ENCODE measurements at regions of chr12 and their contacts with region 1.

Region 1: GRCh38 chr12:22856178-22856577 is 231.2 kb downstream of the ETNK1 start:
- DNase-seq: no peak
- H3K4me3 ChIP-seq: no peak overlapping the region
- H3K27ac ChIP-seq: no peak overlapping the region
- H3K4me1 ChIP-seq: peaks cover 0 to 10% (median 2%) of the 10 kb centered on the region in 4 experiments; a peak in 2 of 7 replicates
- H3K27me3 ChIP-seq: no peaks in the 10 kb centered on the region
- CTCF ChIP-seq: peak in 2 of 3 experiments; percentile 15 to 35; a peak in 2 of 4 replicates
- EP300 ChIP-seq: no peak
- POLR2A ChIP-seq: no peak
- RAD21 ChIP-seq: peak; percentile 72 to 86

Region 2: DNA sequence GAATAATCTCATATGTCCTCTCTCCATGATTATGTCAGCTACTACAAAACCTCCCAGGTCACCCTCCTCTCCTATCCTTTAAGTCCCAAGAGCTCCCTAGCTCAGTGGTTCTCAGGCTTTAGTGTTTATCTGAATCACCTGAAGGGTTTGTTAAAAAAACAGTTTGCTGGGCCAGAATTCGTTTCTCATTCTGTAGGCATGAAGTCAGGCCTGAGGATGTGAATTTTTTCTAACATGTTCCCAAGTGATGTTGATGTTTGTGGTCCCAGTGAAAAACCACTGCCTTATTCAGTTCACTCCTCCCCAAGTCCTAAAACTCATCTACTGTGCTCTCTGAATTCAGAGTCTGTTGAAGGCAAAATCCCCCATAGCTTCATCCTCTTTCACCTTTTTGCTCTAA is 10.2 kb after region 1 on chr12:
- CTCF ChIA-PET with region 1: interaction called, 15 read pairs
- POLR2A ChIA-PET with region 1: no interaction called
- DNase-seq: no peak
- H3K4me3 ChIP-seq: no peak overlapping the region
- H3K27ac ChIP-seq: no peak overlapping the region
- H3K4me1 ChIP-seq: no peaks in the 10 kb centered on the region; a peak in 1 of 7 replicates
- H3K27me3 ChIP-seq: no peaks in the 10 kb centered on the region
- CTCF ChIP-seq: no peak
- EP300 ChIP-seq: no peak
- POLR2A ChIP-seq: no peak
- RAD21 ChIP-seq: no peak

Region 3: GRCh38 chr12:22981711-22982110 is 125.5 kb after region 1 on chr12:
- CTCF ChIA-PET with region 1: interaction called, 22 read pairs
- POLR2A ChIA-PET with region 1: no interaction called
- DNase-seq: no peak
- H3K4me3 ChIP-seq: no peak overlapping the region
- H3K27ac ChIP-seq: no peak overlapping the region
- H3K4me1 ChIP-seq: no peaks in the 10 kb centered on the region; a peak in 1 of 7 replicates
- H3K27me3 ChIP-seq: no peaks in the 10 kb centered on the region
- CTCF ChIP-seq: peak in 2 of 3 experiments; percentile 25 to 35; a peak in 2 of 4 replicates
- EP300 ChIP-seq: no peak
- POLR2A ChIP-seq: no peak
- RAD21 ChIP-seq: peak; percentile 53 to 65

Region 4: DNA sequence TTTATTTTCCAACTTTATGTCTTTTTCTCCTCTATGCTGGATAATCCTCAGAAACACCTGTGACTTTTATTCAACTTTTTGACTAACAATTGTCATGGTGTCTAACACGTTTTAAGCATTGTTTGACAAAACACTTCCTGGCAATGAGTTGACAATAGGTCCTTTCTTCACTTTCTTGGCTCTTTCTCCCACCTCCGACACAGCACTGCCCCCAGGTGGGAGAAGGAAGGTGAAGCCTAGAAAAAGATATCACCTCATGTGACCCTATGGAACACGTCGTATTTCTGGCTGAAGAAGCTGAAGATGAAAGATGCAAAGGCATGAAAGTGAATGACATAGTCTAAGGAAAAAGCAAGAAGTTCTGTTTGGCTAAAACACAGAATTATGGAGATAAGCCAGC is 198.8 kb after region 1 on chr12:
- CTCF ChIA-PET with region 1: interaction called, 108 read pairs
- POLR2A ChIA-PET with region 1: no interaction called
- DNase-seq: peak; percentile 38 to 71
- H3K4me3 ChIP-seq: no peak overlapping the region
- H3K27ac ChIP-seq: no peak overlapping the region
- H3K4me1 ChIP-seq: no peaks in the 10 kb centered on the region
- H3K27me3 ChIP-seq: peaks cover 0 to 1% (median 0%) of the 10 kb centered on the region in 4 experiments; a peak in 1 of 7 replicates
- CTCF ChIP-seq: peak; percentile 54 to 88 (median 78)
- EP300 ChIP-seq: no peak
- POLR2A ChIP-seq: no peak
- RAD21 ChIP-seq: peak; percentile 97

Region 5: GRCh38 chr12:23204933-23205778 is 349.0 kb after region 1 on chr12:
- CTCF ChIA-PET with region 1: interaction called, 13 read pairs
- POLR2A ChIA-PET with region 1: no interaction called
- DNase-seq: no peak
- H3K4me3 ChIP-seq: no peak overlapping the region
- H3K27ac ChIP-seq: no peak overlapping the region
- H3K4me1 ChIP-seq: no peaks in the 10 kb centered on the region
- H3K27me3 ChIP-seq: no peaks in the 10 kb centered on the region
- CTCF ChIP-seq: peak in 2 of 3 experiments; percentile 72 to 84; a peak in 3 of 4 replicates
- EP300 ChIP-seq: no peak
- POLR2A ChIP-seq: no peak
- RAD21 ChIP-seq: peak; percentile 89 to 90